ENCODE measurements at regions of chr10 and their contacts with region 1.

Region 1: DNA sequence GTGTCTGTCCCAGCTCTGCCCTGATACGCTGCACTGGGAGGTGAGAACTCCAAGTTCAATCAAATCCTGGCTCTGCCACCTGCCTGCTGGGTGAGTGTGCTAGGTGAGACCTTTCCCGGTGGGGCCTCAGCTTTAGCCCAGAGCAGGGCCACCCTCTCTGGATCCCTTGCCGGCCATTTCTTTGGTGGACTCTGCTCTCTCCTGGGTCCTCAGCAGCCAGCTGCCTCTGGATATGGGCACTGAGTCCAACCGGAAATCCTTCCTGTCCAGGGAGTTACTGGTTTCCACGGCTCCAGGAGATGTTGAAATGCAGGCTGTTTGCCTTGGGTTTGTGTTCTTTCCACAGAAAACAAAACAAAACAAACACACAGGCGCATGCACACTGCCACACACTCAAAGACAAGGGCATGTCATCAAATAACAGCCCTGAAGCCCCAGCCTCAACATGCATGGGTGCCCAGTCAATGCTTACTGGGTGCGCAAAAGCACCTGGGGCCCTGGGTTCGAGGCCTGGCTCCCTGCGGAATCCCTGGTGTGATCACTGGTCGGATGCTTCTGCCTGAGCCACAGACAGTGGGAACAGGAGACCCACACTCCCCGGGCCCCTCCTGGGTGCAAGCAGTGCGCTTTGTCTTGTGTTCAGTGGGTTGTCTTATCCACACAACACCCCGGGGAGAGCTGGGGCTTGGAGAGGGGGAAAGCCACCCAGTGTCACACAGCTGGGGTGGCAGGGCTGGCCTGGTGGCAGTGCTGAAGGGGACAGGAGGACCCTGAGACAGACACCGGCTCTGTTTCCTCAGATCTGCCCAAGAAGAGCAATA is 33.1 kb downstream of the PPIF start:
- DNase-seq: peak in 1 of 2 donors; percentile 88
- H3K4me3 ChIP-seq: peak overlapping the region in 1 of 2 donors; percentile 14
- H3K27ac ChIP-seq: peak overlapping the region; percentile 77 to 83
- H3K4me1 ChIP-seq: peaks cover 21 to 34% of the 10 kb centered on the region in 2 donors
- H3K27me3 ChIP-seq: no peaks in the 10 kb centered on the region
- CTCF ChIP-seq: no peak

Region 2: DNA sequence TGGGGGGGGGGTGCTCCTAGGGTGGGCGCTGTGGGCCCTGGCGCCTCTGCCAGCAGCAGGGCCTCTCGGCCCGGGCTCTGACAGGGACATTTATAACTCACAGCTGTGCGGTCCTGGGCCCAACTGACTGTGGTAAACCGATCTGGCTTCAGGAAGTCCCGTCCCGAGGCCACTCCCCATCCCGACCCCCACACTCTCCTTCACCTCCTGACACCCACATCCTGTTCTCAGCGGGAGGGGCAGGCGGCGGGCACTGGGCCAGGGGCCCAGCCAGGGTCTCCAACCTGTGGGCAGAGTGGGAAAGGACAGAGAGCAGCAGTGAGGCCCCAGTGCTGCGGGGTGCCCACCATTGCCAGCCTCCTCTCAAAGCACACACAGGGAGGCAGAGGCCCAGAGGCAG is 242.5 kb before region 1 on chr10:
- intact Hi-C with region 1: no loop called
- DNase-seq: no peak
- H3K4me3 ChIP-seq: no peak overlapping the region
- H3K27ac ChIP-seq: peak overlapping the region; percentile 77 to 79
- H3K4me1 ChIP-seq: peaks cover 0 to 18% of the 10 kb centered on the region in 2 donors
- H3K27me3 ChIP-seq: no peaks in the 10 kb centered on the region
- CTCF ChIP-seq: no peak

Region 3: GRCh38 chr10:79400146-79401004 is 20.0 kb after region 1 on chr10:
- intact Hi-C with region 1: loop called (anchors 1 kb)
- DNase-seq: no peak
- H3K4me3 ChIP-seq: peak overlapping the region in 1 of 2 donors; percentile 6
- H3K27ac ChIP-seq: peak overlapping the region; percentile 87 to 88
- H3K4me1 ChIP-seq: peaks cover 42 to 82% of the 10 kb centered on the region in 2 donors
- H3K27me3 ChIP-seq: no peaks in the 10 kb centered on the region
- CTCF ChIP-seq: peak in 2 of 3 experiments; percentile 37 to 54

Region 4: GRCh38 chr10:79487296-79488194 is 107.2 kb after region 1 on chr10:
- intact Hi-C with region 1: no loop called
- DNase-seq: peak in 1 of 2 donors; percentile 70
- H3K4me3 ChIP-seq: no peak overlapping the region
- H3K27ac ChIP-seq: peak overlapping the region; percentile 71 to 76
- H3K4me1 ChIP-seq: peaks cover 4 to 10% of the 10 kb centered on the region in 2 donors
- H3K27me3 ChIP-seq: no peaks in the 10 kb centered on the region
- CTCF ChIP-seq: peak in 2 of 3 experiments; percentile 37 to 50

Measured in ascending aorta (tissue), 2 donors.